ENCODE measurements at regions of chr16 and their contacts with region 1.

Region 1: GRCh38 chr16:66954097-66954659 is 6.9 kb upstream of the CES3 start:
- DNase-seq: no peak
- H3K4me3 ChIP-seq: no peak overlapping the region
- CTCF ChIP-seq: peak; percentile 78

Region 2: GRCh38 chr16:66886346-66886745 is 67.8 kb before region 1 on chr16:
- CTCF ChIA-PET with region 1: interaction called, 35 read pairs
- POLR2A ChIA-PET with region 1: no interaction called
- DNase-seq: no peak
- H3K4me3 ChIP-seq: no peak overlapping the region
- CTCF ChIP-seq: no peak

Region 3: GRCh38 chr16:66970775-66971725 is 16.9 kb after region 1 on chr16:
- CTCF ChIA-PET with region 1: interaction called, 13 read pairs
- POLR2A ChIA-PET with region 1: no interaction called
- DNase-seq: no peak
- H3K4me3 ChIP-seq: no peak overlapping the region
- CTCF ChIP-seq: no peak